Common myeloid progenitor, CD34-positive (primary cell): ENCODE measurements at regions of chr19 and their contacts with region 1.

Region 1: DNA sequence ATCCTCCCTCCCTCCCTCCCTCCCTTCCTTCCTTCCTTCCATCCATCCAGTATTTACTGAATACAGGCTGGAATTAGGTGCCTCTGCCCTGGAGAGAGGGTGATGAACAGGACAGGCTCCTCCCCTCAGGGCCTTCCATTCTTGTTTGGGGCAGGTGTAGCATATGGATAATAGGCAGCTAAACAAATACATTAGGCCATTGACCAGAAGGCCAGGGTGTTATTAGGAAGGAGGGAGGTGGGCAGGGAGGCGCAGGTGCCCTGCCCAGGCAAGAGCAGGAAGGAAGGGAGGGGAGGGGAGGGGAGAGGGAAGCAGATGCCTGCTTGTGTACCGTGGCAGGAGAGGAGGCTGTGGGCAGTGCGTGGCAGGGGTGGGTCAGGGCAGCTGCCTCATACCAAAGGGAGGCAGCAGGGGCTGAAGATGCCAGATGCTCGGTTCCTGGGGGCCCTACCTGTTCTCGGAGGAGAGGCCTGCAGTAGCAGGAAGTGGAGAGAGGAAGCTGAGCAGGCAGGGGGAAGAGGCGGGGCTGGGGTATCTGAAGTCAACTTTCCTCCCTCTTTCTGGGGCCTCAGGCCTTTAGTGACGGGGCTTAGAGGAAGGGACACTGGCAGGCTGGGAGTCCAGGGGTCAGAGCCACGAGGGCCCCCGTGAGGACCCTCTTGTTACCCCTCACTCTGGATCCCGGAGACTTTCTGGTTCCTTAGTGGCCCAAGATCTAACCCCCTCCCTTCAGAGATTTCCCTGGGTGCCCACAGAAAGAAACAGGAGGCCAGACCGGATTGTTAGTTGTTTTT is at the start of gene RINL:
- DNase-seq: peak; percentile 44 to 92 (median 87)
- H3K4me3 ChIP-seq: peak within 1 kb of the TSS in 5 of 7 experiments; percentile 34 to 66 (median 54)
- H3K27ac ChIP-seq: peak within 1 kb of the TSS; percentile 52 to 85
- H3K4me1 ChIP-seq: peaks cover 0 to 42% (median 23%) of the 10 kb centered on the region in 4 experiments
- H3K27me3 ChIP-seq: no peaks in the 10 kb centered on the region

Region 2: DNA sequence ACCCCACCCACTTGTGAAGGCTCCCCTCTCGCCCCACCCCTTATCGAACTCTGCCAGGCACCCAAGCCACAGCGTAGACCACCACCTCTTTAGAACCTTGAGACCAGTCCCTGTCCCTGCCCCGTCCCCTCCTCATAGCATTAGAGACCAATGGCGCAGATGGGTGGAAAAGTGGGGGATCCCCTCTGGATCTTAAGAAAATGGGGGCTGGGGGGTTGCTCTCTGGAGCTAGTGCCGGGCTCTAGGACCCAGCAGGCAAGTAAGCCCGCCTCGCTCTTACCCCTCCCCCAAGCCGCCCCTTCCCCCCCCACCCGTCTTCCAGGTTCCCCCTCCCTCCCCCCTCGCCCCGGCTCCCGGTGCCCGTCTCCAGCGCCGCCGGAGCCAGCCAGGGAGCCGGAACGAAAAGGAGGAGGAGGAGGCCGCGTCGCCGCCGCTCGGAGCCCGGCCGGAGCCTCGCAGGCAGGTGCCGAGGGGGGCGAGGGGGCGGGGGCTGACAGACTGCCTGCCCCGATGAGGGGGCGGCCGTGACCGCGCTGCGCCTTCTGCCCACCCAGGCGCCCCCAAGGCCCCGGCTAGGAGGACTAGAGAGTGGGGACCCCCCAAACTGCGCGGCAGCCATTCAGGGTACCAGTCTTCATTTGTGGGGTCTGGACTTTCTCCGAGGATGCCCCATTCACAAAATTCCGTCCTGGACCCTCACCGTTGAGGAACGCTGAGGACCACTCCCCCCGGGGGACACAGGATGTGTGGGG is 489.5 kb before region 1 on chr19 and contains the start of gene SPRED3:
- CTCF ChIA-PET with region 1: no interaction called
- POLR2A ChIA-PET with region 1: interaction called, 13 read pairs
- DNase-seq: peak in 1 of 3 donors; percentile 41
- H3K4me3 ChIP-seq: peak within 1 kb of the TSS; percentile 15 to 67 (median 52)
- H3K27ac ChIP-seq: no peak within 1 kb of the TSS
- H3K4me1 ChIP-seq: peaks cover 0 to 40% (median 24%) of the 10 kb centered on the region in 4 experiments
- H3K27me3 ChIP-seq: peaks cover 6 to 93% (median 22%) of the 10 kb centered on the region in 5 experiments

Region 3: GRCh38 chr19:38891771-38892170 is 13.8 kb after region 1 on chr19:
- CTCF ChIA-PET with region 1: interaction called, 20 read pairs
- POLR2A ChIA-PET with region 1: no interaction called
- DNase-seq: no peak
- H3K4me3 ChIP-seq: no peak overlapping the region
- H3K27ac ChIP-seq: no peak overlapping the region
- H3K4me1 ChIP-seq: peaks cover 0 to 10% (median 9%) of the 10 kb centered on the region in 4 experiments
- H3K27me3 ChIP-seq: no peaks in the 10 kb centered on the region

Region 4: DNA sequence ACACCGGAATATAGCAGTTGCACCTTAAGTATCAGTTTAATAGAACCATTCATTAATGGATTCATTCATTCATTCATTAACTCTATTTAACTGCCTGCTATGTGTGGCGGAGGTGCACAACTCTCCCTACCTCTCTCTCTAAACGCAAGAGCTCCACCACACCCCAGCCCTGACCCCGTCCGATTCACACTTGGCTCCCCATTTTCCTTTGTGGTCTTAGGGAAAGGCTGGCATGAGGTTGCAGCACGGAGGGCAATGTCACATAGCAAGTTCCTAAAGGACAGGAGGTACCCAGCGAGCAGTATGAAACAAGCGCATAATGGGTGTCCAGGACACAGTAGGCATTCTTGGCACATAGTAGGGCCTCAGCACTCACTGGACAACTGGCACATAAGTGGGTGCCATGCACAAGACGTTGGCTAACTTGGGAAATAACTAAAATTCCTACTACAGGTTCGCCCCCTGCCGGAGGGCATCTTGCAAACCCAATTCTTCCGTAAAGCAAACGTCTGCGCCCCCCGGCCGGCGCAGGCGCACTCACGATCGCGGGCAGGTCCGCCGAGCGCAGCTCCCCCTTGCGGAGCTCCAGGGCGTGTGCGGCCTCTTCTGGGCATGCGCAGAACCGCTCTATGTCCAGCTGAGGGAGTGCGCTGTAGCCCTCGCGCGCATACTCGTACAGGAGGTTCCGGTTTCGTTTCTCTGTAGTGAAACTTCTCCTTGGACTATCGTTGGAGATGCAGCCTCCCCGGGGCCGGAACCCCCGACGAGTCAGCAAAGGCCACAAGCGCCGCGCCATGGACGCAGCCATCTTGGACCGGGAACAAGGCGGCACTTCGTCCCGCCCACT is 52.2 kb after region 1 on chr19 and contains the start of gene SARS2:
- CTCF ChIA-PET with region 1: interaction called, 15 read pairs
- POLR2A ChIA-PET with region 1: no interaction called
- DNase-seq: peak; percentile 94 to 96 (median 96)
- H3K4me3 ChIP-seq: peak within 1 kb of the TSS; percentile 68 to 97 (median 93)
- H3K27ac ChIP-seq: peak within 1 kb of the TSS; percentile 75 to 89
- H3K4me1 ChIP-seq: peaks cover 5 to 24% (median 20%) of the 10 kb centered on the region in 4 experiments
- H3K27me3 ChIP-seq: no peaks in the 10 kb centered on the region